Pancreas (tissue), 10 donors: ENCODE measurements at regions of chr1 and their contacts with region 1.

Region 1: GRCh38 chr1:84944767-84945486 is 51.9 kb upstream of the LPAR3 start:
- DNase-seq: peak in 4 of 6 donors; percentile 33 to 83 (median 76)
- ATAC-seq: peak; percentile 96 to 99 (median 98)
- H3K4me3 ChIP-seq: peak overlapping the region in 3 of 4 donors; percentile 4 to 35 (median 32)
- H3K27ac ChIP-seq: peak overlapping the region in 3 of 4 donors; percentile 33 to 80 (median 74)
- H3K4me1 ChIP-seq: peaks cover 0 to 7% (median 0%) of the 10 kb centered on the region in 3 donors
- H3K27me3 ChIP-seq: no peaks in the 10 kb centered on the region
- CTCF ChIP-seq: peak; percentile 41 to 92 (median 80)

Region 2: GRCh38 chr1:84772428-84772943 is 172.4 kb before region 1 on chr1:
- intact Hi-C with region 1: loop called in 1 of 3 experiments (anchors 10 kb)
- DNase-seq: peak; percentile 65 to 88 (median 79)
- ATAC-seq: peak; percentile 92 to 98 (median 95)
- H3K4me3 ChIP-seq: no peak overlapping the region
- H3K27ac ChIP-seq: no peak overlapping the region
- H3K4me1 ChIP-seq: peaks cover 0 to 6% (median 0%) of the 10 kb centered on the region in 3 donors
- H3K27me3 ChIP-seq: no peaks in the 10 kb centered on the region
- CTCF ChIP-seq: peak; percentile 89 to 94 (median 92)

Region 3: GRCh38 chr1:84996846-84997666 is 52.1 kb after region 1 on chr1 and contains the start of gene MCOLN2:
- intact Hi-C with region 1: no loop called
- DNase-seq: peak; percentile 44 to 84 (median 60)
- ATAC-seq: peak; percentile 96 to 98 (median 97)
- H3K4me3 ChIP-seq: peak within 1 kb of the TSS; percentile 37 to 79 (median 73)
- H3K27ac ChIP-seq: no peak within 1 kb of the TSS
- H3K4me1 ChIP-seq: peaks cover 0 to 4% (median 4%) of the 10 kb centered on the region in 3 donors
- H3K27me3 ChIP-seq: no peaks in the 10 kb centered on the region
- CTCF ChIP-seq: no peak
- total RNA-seq, gene MCOLN2: 0.47 to 1.7 (median 1.1) TPM